PC-3 (cell line): ENCODE measurements at regions of chr12 and their contacts with region 1.

Region 1: GRCh38 chr12:93137656-93138612 is 208.8 kb upstream of the EEA1 start:
- DNase-seq: peak; percentile 96
- ATAC-seq: peak; percentile 66
- H3K4me3 ChIP-seq: peak overlapping the region; percentile 1; the same call in 1 of the 2 replicates
- H3K27ac ChIP-seq: peak overlapping the region; percentile 77
- H3K4me1 ChIP-seq: peaks cover 53% of the 10 kb centered on the region
- H3K27me3 ChIP-seq: no peaks in the 10 kb centered on the region
- CTCF ChIP-seq: no peak

Region 2: DNA sequence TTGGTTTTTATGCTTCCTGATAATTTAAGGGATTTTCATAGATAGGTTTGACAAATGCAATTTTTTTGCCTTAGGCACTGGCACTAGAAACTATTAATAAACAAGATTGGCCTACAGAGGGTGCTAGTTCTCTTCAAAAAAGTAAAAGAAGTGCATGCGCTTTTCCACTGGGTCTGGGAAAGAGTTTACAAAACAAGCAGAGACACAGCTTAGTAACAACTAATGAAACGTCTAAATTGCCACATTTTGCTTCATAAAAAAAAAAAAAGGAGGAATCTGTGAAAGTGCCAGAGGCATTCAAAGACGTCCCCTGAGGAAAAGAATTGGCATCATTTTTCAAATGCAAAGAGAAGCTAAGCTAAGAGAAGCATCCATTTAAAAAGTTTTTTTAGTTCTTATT is 150.6 kb before region 1 on chr12:
- CTCF ChIA-PET with region 1: interaction called, 5 read pairs
- POLR2A ChIA-PET with region 1: no interaction called
- intact Hi-C with region 1: loop called (anchors 5 kb)
- DNase-seq: peak; percentile 87
- ATAC-seq: peak; percentile 77
- H3K4me3 ChIP-seq: no peak overlapping the region
- H3K27ac ChIP-seq: no peak overlapping the region
- H3K4me1 ChIP-seq: peaks cover 7% of the 10 kb centered on the region
- H3K27me3 ChIP-seq: no peaks in the 10 kb centered on the region
- CTCF ChIP-seq: peak; percentile 79

Region 3: DNA sequence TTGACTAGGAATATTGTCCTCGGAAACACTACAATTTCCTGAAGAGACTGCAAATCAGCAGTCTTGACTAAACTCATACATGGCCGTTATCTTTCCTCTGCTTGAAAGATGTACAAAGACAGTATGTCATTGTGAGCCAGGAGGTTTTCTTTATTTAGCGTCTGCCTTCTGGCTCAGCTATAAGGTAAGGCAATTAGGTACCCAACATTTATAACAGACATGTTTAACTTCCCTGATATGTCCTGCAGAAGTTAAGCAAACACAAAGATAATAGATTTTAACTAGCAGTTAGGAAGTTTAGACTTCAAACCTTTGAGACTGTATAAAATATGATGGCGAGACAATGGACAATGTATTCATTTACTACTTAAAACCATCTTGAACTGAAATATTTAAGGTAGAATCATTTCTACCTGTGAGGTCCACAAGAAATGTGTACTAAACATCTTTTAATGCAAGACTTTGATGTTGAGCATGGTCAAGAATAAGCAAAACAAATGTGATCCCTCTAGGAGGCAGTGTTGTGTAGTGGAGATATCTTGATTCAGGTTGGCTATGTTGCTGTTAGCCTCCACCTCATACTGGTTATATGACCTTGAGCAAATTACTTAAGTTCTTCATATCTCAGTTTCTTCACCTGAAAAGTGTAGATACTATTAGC is 112.7 kb before region 1 on chr12:
- CTCF ChIA-PET with region 1: no interaction called
- POLR2A ChIA-PET with region 1: no interaction called
- intact Hi-C with region 1: loop called (anchors 5 kb)
- DNase-seq: peak; percentile 72
- ATAC-seq: peak; percentile 79
- H3K4me3 ChIP-seq: no peak overlapping the region
- H3K27ac ChIP-seq: no peak overlapping the region
- H3K4me1 ChIP-seq: peaks cover 7% of the 10 kb centered on the region
- H3K27me3 ChIP-seq: no peaks in the 10 kb centered on the region
- CTCF ChIP-seq: peak; percentile 84

Region 4: GRCh38 chr12:93060666-93061471 is 77.1 kb before region 1 on chr12:
- CTCF ChIA-PET with region 1: no interaction called
- POLR2A ChIA-PET with region 1: no interaction called
- intact Hi-C with region 1: no loop called
- DNase-seq: no peak
- ATAC-seq: no peak
- H3K4me3 ChIP-seq: no peak overlapping the region
- H3K27ac ChIP-seq: no peak overlapping the region
- H3K4me1 ChIP-seq: no peaks in the 10 kb centered on the region
- H3K27me3 ChIP-seq: no peaks in the 10 kb centered on the region
- CTCF ChIP-seq: no peak

Region 5: DNA sequence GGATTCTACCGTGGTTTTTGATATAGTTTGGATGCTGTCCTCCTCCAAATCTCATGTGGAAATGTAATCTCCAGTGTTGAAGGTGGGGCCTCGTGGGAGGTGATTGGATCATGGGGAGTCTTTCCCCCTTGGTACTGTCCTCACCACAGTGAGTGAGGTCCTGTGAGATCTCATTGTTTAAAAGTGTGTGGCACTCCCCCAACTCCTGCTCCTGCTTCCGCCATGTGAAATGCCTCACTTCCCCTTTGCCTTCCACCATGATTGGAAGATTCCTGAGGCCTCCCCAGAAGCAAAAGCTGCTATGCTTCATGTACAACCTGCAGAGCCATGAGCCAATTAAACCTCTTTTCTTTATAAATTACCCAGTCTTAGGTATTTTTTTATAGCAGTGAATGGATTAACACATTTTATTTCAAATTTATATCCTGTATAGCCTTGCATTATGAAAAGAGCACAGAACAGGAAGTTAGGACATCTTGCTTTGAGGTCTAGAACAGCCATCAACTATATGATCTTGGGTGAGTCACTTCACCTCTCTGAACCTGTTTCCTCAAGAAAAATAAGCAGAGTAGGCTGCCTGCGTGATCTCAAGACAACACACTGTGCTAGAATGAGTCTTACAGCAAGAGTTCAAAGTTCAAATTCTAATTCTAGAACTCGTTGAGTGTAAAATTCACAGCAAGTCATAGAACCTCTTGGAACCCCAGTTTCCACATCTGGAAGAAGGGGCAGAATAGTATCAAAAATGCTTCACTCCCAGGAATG is 47.9 kb before region 1 on chr12:
- CTCF ChIA-PET with region 1: no interaction called
- POLR2A ChIA-PET with region 1: no interaction called
- intact Hi-C with region 1: loop called (anchors 2 kb)
- DNase-seq: peak; percentile 81
- ATAC-seq: peak; percentile 79
- H3K4me3 ChIP-seq: no peak overlapping the region
- H3K27ac ChIP-seq: peak overlapping the region; percentile 89
- H3K4me1 ChIP-seq: peaks cover 53% of the 10 kb centered on the region
- H3K27me3 ChIP-seq: no peaks in the 10 kb centered on the region
- CTCF ChIP-seq: no peak

Region 6: DNA sequence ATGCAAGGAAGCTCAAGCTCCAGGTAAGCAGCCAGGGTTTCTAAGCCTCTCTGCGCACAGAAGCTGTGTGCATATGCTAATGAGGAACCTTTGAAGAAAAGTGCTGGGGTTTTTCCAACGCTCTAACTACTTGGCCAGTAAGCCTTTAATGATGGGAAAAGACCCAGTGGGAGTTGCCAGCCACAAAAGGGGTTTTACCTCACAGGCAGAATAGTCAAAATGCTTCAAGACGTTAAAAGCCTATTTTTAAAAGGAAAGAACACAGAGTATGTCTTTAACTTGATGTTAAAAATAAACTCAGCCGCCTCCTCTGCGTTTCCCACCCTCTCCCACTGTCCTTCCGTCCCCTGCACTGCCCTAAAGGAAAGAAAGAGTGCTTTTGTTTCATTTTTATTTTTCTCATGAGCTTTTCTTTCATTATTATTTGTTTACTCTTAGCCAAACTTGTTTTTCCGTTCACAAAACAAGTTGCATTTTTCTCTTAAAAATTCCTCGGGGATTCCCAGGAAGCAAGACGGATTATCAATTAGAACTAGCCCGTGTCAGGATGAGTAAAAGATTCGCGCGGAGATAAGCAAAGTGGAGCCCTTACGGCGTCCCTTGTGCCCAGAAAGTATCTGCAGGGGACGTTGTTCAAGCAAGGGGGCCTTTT is 30.0 kb after region 1 on chr12:
- CTCF ChIA-PET with region 1: no interaction called
- POLR2A ChIA-PET with region 1: no interaction called
- intact Hi-C with region 1: loop called (anchors 2 kb)
- DNase-seq: peak; percentile 43
- ATAC-seq: peak; percentile 38
- H3K4me3 ChIP-seq: peak overlapping the region; percentile 84
- H3K27ac ChIP-seq: no peak overlapping the region
- H3K4me1 ChIP-seq: peaks cover 23% of the 10 kb centered on the region
- H3K27me3 ChIP-seq: no peaks in the 10 kb centered on the region
- CTCF ChIP-seq: no peak

Region 7: DNA sequence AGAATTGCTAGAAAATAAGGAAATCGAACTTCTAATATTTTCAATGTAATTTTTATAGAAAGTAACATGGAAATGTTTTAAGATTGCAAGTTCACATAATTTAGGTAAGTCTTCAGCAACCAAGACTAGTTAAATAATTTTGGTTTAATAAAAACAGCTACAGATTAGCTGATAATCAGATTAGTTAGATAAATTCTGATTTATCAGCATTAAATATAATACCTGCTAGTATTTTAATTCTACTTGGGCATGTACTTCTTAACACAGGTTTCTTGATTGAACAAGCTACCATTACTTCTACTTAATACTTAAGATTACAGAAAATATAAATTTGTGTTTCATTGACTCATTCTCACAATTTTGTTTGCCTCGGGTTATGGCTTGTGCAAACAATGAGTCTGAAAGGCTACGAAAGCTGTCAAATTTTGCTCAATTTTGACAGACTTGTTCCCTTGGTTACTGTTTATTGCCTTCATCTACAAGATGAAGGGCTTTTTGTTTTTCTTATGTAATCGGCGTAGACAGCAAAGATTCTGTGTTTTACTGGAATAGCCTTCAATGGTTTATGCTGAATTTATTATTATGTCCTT is 123.7 kb after region 1 on chr12:
- CTCF ChIA-PET with region 1: no interaction called
- POLR2A ChIA-PET with region 1: no interaction called
- intact Hi-C with region 1: loop called (anchors 5 kb)
- DNase-seq: peak; percentile 74
- ATAC-seq: peak; percentile 71
- H3K4me3 ChIP-seq: no peak overlapping the region
- H3K27ac ChIP-seq: no peak overlapping the region
- H3K4me1 ChIP-seq: peaks cover 15% of the 10 kb centered on the region
- H3K27me3 ChIP-seq: no peaks in the 10 kb centered on the region
- CTCF ChIP-seq: no peak

Region 8: DNA sequence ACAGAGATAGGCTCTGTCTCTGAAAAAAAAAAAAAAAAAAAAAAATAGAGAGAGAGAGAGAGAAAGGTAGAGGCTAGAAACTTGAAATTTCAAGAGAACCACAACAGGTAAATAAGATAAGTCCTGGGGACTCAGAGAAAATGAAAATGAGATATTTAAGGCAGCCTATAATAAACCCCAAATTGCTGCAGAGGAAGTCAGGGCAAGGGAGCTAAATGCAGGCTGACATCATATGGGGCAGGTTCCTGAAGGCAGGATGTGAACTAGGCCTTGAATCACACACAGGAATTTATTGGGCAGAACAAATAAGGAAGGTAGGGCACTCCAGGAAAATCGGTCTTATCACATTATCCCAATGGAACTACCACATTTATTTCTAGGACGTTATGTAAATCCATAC is 184.8 kb after region 1 on chr12:
- CTCF ChIA-PET with region 1: no interaction called
- POLR2A ChIA-PET with region 1: no interaction called
- intact Hi-C with region 1: loop called (anchors 5 kb)
- DNase-seq: peak; percentile 80
- ATAC-seq: peak; percentile 94
- H3K4me3 ChIP-seq: no peak overlapping the region
- H3K27ac ChIP-seq: no peak overlapping the region; the same call in 1 of the 2 replicates
- H3K4me1 ChIP-seq: peaks cover 24% of the 10 kb centered on the region
- H3K27me3 ChIP-seq: no peaks in the 10 kb centered on the region
- CTCF ChIP-seq: no peak